HCT116 (cell line): ENCODE measurements at regions of chr6 and their contacts with region 1.

Region 1: GRCh38 chr6:160455541-160456213 is 107.5 kb downstream of the SLC22A3 start:
- DNase-seq: peak; percentile 29
- ATAC-seq: peak; percentile 89
- H3K4me3 ChIP-seq: no peak overlapping the region
- H3K27ac ChIP-seq: no peak overlapping the region
- H3K4me1 ChIP-seq: no peaks in the 10 kb centered on the region
- H3K27me3 ChIP-seq: 0 out of 2 replicates have a peak, but pooled peaks cover 5% of the 10 kb centered on the region
- CTCF ChIP-seq: peak; percentile 87 to 99 (median 91)
- POLR2A ChIP-seq: no peak
- RAD21 ChIP-seq: peak; percentile 98

Region 2: DNA sequence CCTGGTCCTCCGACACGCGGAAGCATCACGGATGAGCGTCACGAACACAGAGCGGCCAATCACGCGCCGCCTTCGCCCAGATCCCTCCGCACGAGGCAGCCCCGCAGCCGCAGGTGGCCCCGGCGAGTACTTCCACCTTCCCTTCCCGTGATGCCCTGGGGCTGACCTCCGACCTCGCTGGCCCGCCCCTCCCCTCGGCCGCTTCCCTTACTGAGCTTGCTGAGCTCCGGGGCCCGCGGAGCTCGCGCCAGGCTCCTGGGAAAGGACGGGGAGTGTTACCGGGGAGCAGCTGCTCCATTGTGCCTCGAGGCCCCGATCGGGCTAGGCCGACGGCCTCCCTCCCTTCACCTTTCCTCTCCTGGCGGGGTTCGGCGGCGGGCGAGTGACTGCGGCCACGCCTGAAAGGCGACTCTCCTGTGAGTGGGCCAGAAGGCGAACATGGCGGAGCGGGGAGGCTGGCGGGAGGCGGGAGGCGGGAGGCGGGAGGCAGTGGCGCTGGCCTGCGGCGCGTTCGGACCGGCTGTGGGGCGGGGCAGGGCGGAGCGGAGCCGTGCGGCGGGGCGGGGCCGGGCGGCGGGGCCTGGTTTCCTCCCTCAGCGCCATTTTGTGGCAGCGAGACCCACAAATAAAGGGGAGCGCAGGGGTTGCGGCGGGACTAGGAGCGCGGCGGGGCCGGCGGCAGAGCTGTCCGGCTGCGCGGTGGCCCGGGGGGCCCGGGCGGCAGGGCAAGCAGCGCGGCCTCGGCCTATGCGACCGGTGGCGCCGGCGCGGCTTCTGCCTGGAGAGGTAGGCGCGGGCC is 728.6 kb before region 1 on chr6 and contains the start of gene WTAP:
- CTCF ChIA-PET with region 1: no interaction called
- POLR2A ChIA-PET with region 1: no interaction called
- RAD21 ChIA-PET with region 1: no interaction called
- intact Hi-C with region 1: loop called (anchors 10 kb)
- DNase-seq: peak; percentile 94
- ATAC-seq: peak; percentile 87
- H3K4me3 ChIP-seq: peak within 1 kb of the TSS; percentile 81 to 89
- H3K27ac ChIP-seq: peak within 1 kb of the TSS; percentile 98
- H3K4me1 ChIP-seq: peaks cover 8 to 31% of the 10 kb centered on the region in 2 experiments; a peak in 3 of 4 replicates
- H3K27me3 ChIP-seq: no peaks in the 10 kb centered on the region
- CTCF ChIP-seq: no peak
- POLR2A ChIP-seq: peak; percentile 87
- RAD21 ChIP-seq: no peak
- total RNA-seq, gene WTAP: 88.6 TPM

Region 3: DNA sequence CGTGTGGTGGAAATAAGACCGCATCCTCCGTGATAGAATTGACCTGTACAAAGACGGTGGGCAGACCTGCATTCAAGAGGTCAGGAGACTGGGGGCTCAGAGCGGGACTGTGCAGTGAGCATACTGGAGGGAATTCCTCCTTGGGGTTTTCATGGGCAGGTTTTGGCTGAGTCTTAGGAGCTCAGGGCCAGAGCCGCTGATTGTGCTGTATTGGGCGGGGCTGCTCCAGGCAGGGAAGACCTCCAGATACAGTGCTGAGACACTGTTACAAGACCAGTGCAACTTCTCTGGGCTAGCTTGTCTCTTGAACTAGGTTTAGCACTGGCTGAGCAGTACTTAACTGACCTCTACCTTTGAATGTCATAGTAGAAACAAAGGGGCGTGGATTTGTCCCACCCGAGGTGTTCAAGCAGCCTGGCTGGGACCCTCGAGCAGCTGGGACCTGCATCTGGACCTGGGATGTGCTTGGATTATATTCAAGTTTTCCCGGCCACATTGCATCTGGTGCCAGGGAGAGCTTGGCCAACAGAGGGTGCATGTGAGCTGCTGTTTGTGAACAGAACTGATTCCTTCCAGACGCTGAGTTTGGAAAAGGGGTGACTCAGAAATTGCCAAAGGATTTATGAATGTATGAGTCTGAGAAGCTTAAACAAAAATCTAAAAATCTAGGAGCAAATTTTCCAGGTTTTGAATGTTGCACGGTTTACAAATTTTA is 367.5 kb before region 1 on chr6:
- CTCF ChIA-PET with region 1: interaction called, 10 read pairs
- POLR2A ChIA-PET with region 1: no interaction called
- RAD21 ChIA-PET with region 1: no interaction called
- intact Hi-C with region 1: loop called (anchors 1 kb)
- DNase-seq: peak; percentile 4
- ATAC-seq: peak; percentile 80
- H3K4me3 ChIP-seq: no peak overlapping the region
- H3K27ac ChIP-seq: no peak overlapping the region
- H3K4me1 ChIP-seq: no peaks in the 10 kb centered on the region
- H3K27me3 ChIP-seq: no peaks in the 10 kb centered on the region
- CTCF ChIP-seq: peak; percentile 39 to 73 (median 65); a peak in 5 of 6 replicates
- POLR2A ChIP-seq: no peak
- RAD21 ChIP-seq: peak; percentile 46

Region 4: GRCh38 chr6:160137989-160138835 is 317.5 kb before region 1 on chr6:
- CTCF ChIA-PET with region 1: interaction called, 19 read pairs
- POLR2A ChIA-PET with region 1: no interaction called
- RAD21 ChIA-PET with region 1: interaction called, 5 to 6 read pairs
- intact Hi-C with region 1: loop called (anchors 1 kb)
- DNase-seq: peak; percentile 32
- ATAC-seq: peak; percentile 61
- H3K4me3 ChIP-seq: no peak overlapping the region
- H3K27ac ChIP-seq: no peak overlapping the region
- H3K4me1 ChIP-seq: peaks cover 0 to 11% of the 10 kb centered on the region in 2 experiments; a peak in 1 of 4 replicates
- H3K27me3 ChIP-seq: no peaks in the 10 kb centered on the region
- CTCF ChIP-seq: peak in 2 of 3 experiments; percentile 70 to 71; a peak in 5 of 6 replicates
- POLR2A ChIP-seq: no peak
- RAD21 ChIP-seq: peak; percentile 82

Region 5: DNA sequence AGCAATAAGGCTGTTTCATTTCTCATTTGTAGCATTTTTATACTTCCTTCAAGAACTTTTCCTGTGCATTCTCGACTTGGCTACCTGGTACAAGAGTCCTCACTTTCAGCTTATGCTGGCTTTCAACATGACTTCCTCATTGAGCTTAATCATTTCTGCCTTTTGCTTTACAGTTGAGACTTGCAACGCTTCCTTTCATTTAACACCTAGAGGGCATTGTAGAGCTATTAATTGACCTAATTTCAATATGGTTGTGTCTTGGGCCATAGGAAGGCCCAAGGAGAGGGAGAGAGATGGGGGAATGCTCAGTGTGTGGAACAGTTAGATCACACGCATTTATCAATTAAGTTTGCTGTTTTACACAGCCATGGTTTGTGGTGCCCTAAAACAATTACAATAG is 234.3 kb before region 1 on chr6:
- CTCF ChIA-PET with region 1: interaction called, 23 read pairs
- POLR2A ChIA-PET with region 1: no interaction called
- RAD21 ChIA-PET with region 1: interaction called, 4 to 6 read pairs
- intact Hi-C with region 1: loop called (anchors 1 kb)
- DNase-seq: no peak
- ATAC-seq: peak; percentile 82
- H3K4me3 ChIP-seq: no peak overlapping the region
- H3K27ac ChIP-seq: no peak overlapping the region
- H3K4me1 ChIP-seq: no peaks in the 10 kb centered on the region
- H3K27me3 ChIP-seq: no peaks in the 10 kb centered on the region
- CTCF ChIP-seq: peak; percentile 4 to 37 (median 35); a peak in 3 of 6 replicates
- POLR2A ChIP-seq: no peak
- RAD21 ChIP-seq: peak; percentile 66

Region 6: GRCh38 chr6:160279850-160280249 is 175.8 kb before region 1 on chr6:
- CTCF ChIA-PET with region 1: no interaction called
- POLR2A ChIA-PET with region 1: no interaction called
- RAD21 ChIA-PET with region 1: no interaction called
- intact Hi-C with region 1: no loop called
- DNase-seq: no peak
- ATAC-seq: no peak
- H3K4me3 ChIP-seq: no peak overlapping the region
- H3K27ac ChIP-seq: no peak overlapping the region
- H3K4me1 ChIP-seq: no peaks in the 10 kb centered on the region
- H3K27me3 ChIP-seq: no peaks in the 10 kb centered on the region
- CTCF ChIP-seq: no peak
- POLR2A ChIP-seq: no peak
- RAD21 ChIP-seq: no peak